ENCODE measurements at regions of chr14 and their contacts with region 1.

Region 1: GRCh38 chr14:55454264-55455002 is 14.0 kb upstream of the TBPL2 start:
- DNase-seq: peak; percentile 68
- H3K4me3 ChIP-seq: peak overlapping the region in 1 of 4 donors; percentile 14
- H3K27ac ChIP-seq: peak overlapping the region; percentile 73 to 81 (median 78)
- H3K4me1 ChIP-seq: peaks cover 5 to 57% (median 20%) of the 10 kb centered on the region in 4 donors
- H3K27me3 ChIP-seq: no peaks in the 10 kb centered on the region
- CTCF ChIP-seq: no peak
- EP300 ChIP-seq: no peak
- POLR2A ChIP-seq: no peak

Region 2: GRCh38 chr14:53692885-53693284 is 1761.5 kb before region 1 on chr14:
- in situ Hi-C with region 1: no loop called
- intact Hi-C with region 1: loop called (anchors 5 kb)
- DNase-seq: no peak
- H3K4me3 ChIP-seq: no peak overlapping the region
- H3K27ac ChIP-seq: no peak overlapping the region
- H3K4me1 ChIP-seq: no peaks in the 10 kb centered on the region
- H3K27me3 ChIP-seq: no peaks in the 10 kb centered on the region
- CTCF ChIP-seq: no peak
- EP300 ChIP-seq: no peak
- POLR2A ChIP-seq: no peak

Region 3: DNA sequence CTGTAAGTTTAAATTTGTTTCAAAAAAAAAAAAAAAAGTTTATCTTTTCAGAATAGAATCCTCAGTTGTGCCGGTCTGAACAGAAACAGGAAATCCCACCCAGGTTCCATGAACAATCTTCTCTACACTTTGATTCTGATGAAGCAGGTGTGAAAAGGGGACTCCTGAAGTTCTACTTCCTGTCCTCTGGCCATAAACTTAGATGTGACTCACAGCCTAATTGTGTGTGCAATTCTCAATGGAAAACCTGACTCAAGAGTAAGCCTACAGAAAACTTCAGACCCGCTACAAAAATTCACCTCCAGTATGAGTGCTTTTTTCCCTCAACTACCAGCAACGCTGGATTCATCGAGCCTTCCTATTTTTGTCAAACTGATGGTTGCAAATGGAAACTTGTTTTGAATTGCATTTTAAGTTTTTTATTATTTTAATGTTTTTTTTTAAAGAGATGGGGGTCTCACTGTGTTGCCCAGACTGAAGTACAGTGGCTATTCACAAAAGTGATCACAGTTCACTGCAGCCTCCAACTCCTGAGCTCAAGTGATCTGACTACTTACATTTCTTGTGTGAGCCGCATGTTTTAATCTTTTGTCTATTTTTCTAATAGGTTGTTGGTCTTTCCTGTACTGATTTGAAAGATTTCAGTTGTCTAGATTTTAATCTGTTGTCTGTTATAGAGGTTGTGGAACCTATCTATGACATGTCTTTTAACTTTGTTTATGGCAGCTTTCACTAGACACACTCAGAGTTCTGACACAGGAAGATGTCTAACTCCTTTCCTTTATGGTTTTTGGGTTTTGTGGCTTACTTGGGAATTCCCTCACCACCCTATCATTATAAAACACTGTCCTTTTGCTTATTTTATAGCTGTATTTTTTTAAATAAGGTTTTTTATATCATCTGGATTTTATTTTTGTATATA is 80.4 kb before region 1 on chr14:
- in situ Hi-C with region 1: no loop called
- intact Hi-C with region 1: no loop called
- DNase-seq: no peak
- H3K4me3 ChIP-seq: no peak overlapping the region
- H3K27ac ChIP-seq: peak overlapping the region in 1 of 4 donors; percentile 11
- H3K4me1 ChIP-seq: peaks cover 0 to 11% (median 0%) of the 10 kb centered on the region in 4 donors
- H3K27me3 ChIP-seq: no peaks in the 10 kb centered on the region
- CTCF ChIP-seq: no peak
- EP300 ChIP-seq: no peak
- POLR2A ChIP-seq: no peak

Region 4: GRCh38 chr14:55832122-55832911 is 377.9 kb after region 1 on chr14:
- in situ Hi-C with region 1: no loop called
- intact Hi-C with region 1: no loop called
- DNase-seq: peak; percentile 42
- H3K4me3 ChIP-seq: no peak overlapping the region
- H3K27ac ChIP-seq: peak overlapping the region; percentile 58 to 74 (median 68)
- H3K4me1 ChIP-seq: peaks cover 0 to 12% (median 5%) of the 10 kb centered on the region in 4 donors
- H3K27me3 ChIP-seq: no peaks in the 10 kb centered on the region
- CTCF ChIP-seq: peak in 2 of 5 experiments; percentile 33 to 58
- EP300 ChIP-seq: no peak
- POLR2A ChIP-seq: peak; percentile 42

Measured in transverse colon (tissue), 4 donors.